ENCODE measurements at regions of chr5 and their contacts with region 1.

Region 1: GRCh38 chr5:88729084-88729828 is 153.7 kb downstream of the MEF2C start:
- DNase-seq: peak; percentile 89 to 95 (median 92)
- H3K4me3 ChIP-seq: no peak overlapping the region
- H3K27ac ChIP-seq: peak overlapping the region in 1 of 2 experiments; percentile 18
- H3K4me1 ChIP-seq: peaks cover 26 to 43% (median 34%) of the 10 kb centered on the region in 4 experiments
- H3K27me3 ChIP-seq: no peaks in the 10 kb centered on the region

Region 2: GRCh38 chr5:88322785-88323184 is 406.5 kb before region 1 on chr5:
- CTCF ChIA-PET with region 1: no interaction called
- POLR2A ChIA-PET with region 1: no interaction called
- DNase-seq: no peak
- H3K4me3 ChIP-seq: no peak overlapping the region
- H3K27ac ChIP-seq: no peak overlapping the region
- H3K4me1 ChIP-seq: no peaks in the 10 kb centered on the region
- H3K27me3 ChIP-seq: no peaks in the 10 kb centered on the region

Region 3: DNA sequence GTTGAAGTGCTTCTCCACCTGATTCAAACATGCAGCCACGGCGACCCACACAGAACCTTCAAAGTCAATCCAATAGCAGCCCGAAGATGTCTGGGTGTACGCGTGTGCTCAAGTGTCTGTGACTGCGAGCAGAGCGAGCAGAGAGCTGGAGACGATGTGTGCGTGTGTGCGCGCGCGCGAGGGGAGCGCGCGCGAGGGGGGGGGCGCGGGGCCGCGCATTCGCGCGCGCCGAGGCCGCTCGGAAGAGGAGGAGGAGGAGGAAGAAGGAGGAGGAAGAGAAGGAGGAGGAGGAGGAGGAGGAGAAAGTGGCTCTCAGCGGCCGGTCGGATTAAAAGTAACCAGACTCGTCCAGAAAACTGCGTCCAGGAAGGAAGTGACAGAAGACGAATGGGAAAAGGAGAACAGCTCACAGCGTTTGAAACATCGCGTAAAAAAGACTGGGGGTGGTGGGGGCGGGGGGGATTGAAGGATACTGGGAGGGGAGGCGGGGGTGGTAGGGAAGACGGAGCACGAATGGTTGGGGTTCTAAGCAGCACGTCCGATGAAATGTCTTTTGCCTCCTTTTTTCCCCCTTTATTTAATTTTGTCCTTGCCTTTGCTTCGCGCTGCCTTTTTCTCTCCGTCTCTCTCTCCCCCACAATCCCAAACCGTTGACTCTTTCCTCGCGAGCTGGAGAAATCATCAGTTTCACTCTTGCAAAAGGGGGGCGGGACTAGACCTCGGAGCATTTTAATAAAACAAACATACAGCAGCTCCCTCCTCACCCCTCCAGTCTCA is 154.0 kb after region 1 on chr5 and contains the start of gene MEF2C:
- CTCF ChIA-PET with region 1: interaction called, 15 read pairs
- POLR2A ChIA-PET with region 1: interaction called, 10 read pairs
- DNase-seq: peak; percentile 88 to 94 (median 93)
- H3K4me3 ChIP-seq: peak within 1 kb of the TSS; percentile 64 to 100 (median 98)
- H3K27ac ChIP-seq: peak within 1 kb of the TSS; percentile 94 to 95
- H3K4me1 ChIP-seq: peaks cover 11 to 60% (median 48%) of the 10 kb centered on the region in 4 experiments
- H3K27me3 ChIP-seq: no peaks in the 10 kb centered on the region

Region 4: GRCh38 chr5:89729623-89730301 is 1000.5 kb after region 1 on chr5:
- CTCF ChIA-PET with region 1: interaction called, 10 read pairs
- POLR2A ChIA-PET with region 1: no interaction called
- DNase-seq: peak in 1 of 3 donors; percentile 10
- H3K4me3 ChIP-seq: no peak overlapping the region
- H3K27ac ChIP-seq: no peak overlapping the region
- H3K4me1 ChIP-seq: peaks cover 0 to 4% (median 2%) of the 10 kb centered on the region in 4 experiments
- H3K27me3 ChIP-seq: no peaks in the 10 kb centered on the region

Region 5: DNA sequence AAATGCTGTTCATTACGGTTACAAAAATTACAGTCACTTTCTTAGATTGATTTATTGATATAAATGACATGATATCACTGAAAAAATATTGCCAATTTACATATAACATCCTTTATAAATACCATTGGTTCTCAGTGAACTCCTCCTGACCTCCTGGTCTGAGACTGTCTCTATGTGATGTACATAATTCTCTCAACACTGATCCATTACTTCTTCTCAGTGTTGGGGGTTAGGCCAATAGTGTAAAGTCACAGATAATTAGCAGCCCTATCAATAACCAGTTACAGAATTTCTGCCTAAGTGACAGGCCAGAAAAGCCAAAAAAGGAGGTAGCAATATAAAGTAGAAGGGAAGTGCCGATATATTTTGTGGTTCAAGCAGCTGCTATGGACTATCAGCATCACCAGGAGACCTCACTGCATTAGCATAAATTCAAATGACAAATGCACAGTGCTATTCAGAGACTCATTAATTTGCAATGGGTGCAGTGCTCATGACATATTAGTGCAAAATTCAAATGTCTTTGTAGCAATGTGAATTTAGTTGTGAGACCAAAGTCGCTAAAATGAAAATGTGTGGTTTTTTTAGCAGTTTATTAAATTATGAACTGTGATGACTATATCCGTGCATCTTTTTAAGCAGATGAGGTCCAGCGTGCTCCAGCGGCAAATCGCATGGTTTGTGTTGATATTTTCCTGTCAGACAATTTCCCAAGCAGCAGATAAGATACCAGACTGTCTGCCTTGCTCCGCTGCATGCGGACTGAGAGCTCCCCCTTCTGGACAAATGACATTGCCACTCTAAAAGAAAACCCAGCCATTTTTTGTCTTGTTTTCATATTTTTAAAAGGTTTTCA is 1535.7 kb after region 1 on chr5:
- CTCF ChIA-PET with region 1: interaction called, 80 read pairs
- POLR2A ChIA-PET with region 1: no interaction called
- DNase-seq: peak; percentile 61 to 78 (median 70)
- H3K4me3 ChIP-seq: no peak overlapping the region
- H3K27ac ChIP-seq: no peak overlapping the region
- H3K4me1 ChIP-seq: peaks cover 0 to 2% (median 1%) of the 10 kb centered on the region in 4 experiments
- H3K27me3 ChIP-seq: no peaks in the 10 kb centered on the region

Measured in common myeloid progenitor, CD34-positive (primary cell).